Caco-2 (cell line): ENCODE measurements at regions of chr5 and their contacts with region 1.

Region 1: GRCh38 chr5:124583469-124584350 is 162.7 kb downstream of the ZNF608 start:
- DNase-seq: no peak
- H3K4me3 ChIP-seq: no peak overlapping the region
- H3K4me3 Mint-ChIP-seq: no peak overlapping the region
- H3K27ac Mint-ChIP-seq: peak overlapping the region; percentile 89
- H3K4me1 ChIP-seq: peaks cover 38% of the 10 kb centered on the region
- H3K4me1 Mint-ChIP-seq: peaks cover 30% of the 10 kb centered on the region
- H3K27me3 ChIP-seq: no peaks in the 10 kb centered on the region
- H3K27me3 Mint-ChIP-seq: no peaks in the 10 kb centered on the region
- CTCF ChIP-seq: no peak

Region 2: DNA sequence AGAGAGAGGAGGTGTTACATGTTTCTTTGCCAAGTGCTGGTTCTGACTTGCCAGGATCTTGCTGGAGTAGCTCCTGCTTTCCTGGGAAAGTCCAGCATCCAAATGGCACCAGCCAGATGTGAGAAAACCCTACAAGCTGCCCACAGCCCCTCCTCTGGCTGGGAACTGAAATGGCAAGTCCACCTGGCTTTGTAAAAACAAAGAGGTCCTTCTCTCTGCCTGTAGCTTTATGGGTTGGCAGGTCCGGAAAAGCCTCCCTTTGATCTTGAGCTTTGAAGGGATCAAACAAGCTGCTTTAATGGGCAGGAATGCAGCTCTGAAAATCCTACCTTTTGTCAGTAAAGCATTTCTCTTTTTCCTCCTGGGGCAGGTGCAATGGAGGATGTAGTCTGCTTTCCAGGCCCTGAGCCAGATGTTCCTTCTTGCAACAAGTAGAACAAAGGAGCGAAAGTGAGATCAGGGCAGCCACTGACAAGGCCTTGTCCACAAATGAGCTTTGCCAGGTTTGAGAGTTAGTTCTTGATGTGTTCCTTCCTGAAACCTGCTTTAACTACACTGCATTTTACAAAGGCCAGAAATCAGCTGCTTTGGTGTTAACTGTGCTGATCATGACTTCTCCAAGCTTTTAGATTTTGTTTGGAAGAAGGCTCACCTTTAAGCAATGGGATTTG is 293.9 kb before region 1 on chr5:
- CTCF ChIA-PET with region 1: no interaction called
- POLR2A ChIA-PET with region 1: no interaction called
- intact Hi-C with region 1: loop called (anchors 1 kb)
- DNase-seq: peak; percentile 76 to 78
- H3K4me3 ChIP-seq: no peak overlapping the region
- H3K4me3 Mint-ChIP-seq: no peak overlapping the region
- H3K27ac Mint-ChIP-seq: peak overlapping the region; percentile 13
- H3K4me1 ChIP-seq: peaks cover 21% of the 10 kb centered on the region; the same call in 1 of the 2 replicates
- H3K4me1 Mint-ChIP-seq: peaks cover 18% of the 10 kb centered on the region
- H3K27me3 ChIP-seq: no peaks in the 10 kb centered on the region
- H3K27me3 Mint-ChIP-seq: no peaks in the 10 kb centered on the region
- CTCF ChIP-seq: peak; percentile 20 to 42

Region 3: DNA sequence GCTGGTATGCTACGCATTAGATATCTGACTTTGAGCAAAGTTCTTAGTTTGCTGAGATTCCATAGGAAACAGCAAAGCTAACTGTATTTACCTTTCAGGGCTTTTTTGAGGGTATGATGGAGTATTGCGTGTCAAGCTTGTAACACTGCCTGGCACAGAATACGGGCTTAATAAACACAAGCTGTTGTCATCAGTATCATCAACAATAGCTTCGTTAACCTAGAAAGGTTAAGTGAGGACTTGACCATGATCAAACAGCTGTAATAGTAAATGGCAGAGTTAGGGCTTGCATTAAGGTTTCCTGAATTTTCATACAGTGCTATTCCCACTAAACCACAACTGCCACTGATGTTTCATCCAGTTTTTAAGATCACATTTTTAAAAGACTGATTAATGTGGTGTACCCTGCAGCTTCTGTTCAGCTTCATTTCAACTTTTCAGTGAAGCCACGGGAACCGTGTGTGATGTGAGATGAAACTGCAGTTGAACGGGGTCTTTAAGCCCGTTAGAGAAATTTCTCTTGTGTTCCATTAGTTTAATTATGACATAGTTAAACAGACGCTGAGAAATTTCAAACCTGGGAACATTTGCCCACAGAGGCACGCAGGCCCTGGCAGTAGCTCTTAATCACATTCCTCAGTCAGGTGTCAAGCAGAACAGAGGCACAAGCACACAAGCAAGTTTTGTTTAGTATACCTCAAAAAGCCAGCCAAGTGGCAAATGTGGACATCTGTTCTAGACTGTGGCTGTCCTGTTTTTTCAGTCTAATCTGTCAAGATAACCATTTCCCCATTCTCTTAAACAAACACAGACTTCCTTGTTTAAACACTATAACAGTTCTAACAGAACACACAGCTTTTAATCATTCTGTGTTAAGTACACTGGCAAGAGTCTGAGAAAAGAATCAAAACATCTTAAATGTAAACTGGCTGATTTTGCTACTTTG is 15.6 kb after region 1 on chr5:
- CTCF ChIA-PET with region 1: interaction called, 3 read pairs
- POLR2A ChIA-PET with region 1: no interaction called
- intact Hi-C with region 1: loop called (anchors 1 kb)
- DNase-seq: peak; percentile 55 to 59
- H3K4me3 ChIP-seq: no peak overlapping the region
- H3K4me3 Mint-ChIP-seq: no peak overlapping the region
- H3K27ac Mint-ChIP-seq: no peak overlapping the region
- H3K4me1 ChIP-seq: peaks cover 29% of the 10 kb centered on the region
- H3K4me1 Mint-ChIP-seq: peaks cover 13% of the 10 kb centered on the region
- H3K27me3 ChIP-seq: no peaks in the 10 kb centered on the region
- H3K27me3 Mint-ChIP-seq: no peaks in the 10 kb centered on the region
- CTCF ChIP-seq: no peak

Region 4: DNA sequence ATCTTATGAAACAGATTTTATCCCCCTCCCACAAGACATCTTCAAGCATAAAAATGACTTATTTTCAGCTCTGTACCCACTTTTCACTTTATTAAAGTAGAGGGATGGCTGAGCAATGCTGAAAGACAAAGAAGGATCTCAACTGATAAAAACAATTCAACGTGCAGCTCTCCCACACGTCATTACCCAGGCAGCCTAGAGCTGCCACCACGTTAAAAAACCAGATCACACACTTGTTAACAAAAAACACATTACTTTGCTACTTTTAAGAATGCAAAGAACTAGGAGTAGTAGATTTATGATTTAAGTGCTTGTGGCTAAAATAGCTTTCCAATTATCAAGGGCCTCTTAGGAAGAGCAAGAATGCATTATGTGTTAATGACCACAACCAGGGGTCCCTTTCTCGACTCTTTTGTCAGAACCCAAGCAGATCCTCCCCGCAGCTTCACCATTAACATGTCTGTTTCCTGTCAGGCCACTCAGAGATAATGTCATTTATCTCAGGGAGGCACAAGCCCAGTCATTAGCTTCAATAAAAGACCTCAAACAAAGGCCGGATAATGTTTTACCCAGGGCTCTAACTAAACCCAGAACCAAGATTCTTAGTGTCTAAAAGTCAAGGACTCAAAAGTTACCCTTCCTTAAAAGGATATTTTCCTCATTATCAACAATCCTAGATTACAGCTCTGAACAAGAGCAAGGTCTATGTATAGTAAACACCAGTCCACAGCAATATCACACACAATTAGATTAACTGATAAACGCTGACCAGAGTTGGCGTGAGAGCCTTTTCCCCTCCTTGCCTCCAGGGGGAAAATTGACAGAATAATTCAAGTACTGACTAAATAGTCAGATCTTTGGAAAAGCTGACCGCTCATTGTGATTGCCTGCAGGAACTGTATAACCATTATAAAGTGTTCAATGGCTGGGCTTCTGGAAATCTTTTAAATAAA is 155.2 kb after region 1 on chr5:
- CTCF ChIA-PET with region 1: no interaction called
- POLR2A ChIA-PET with region 1: no interaction called
- intact Hi-C with region 1: loop called (anchors 2 kb)
- DNase-seq: peak; percentile 37 to 69
- H3K4me3 ChIP-seq: no peak overlapping the region
- H3K4me3 Mint-ChIP-seq: peak overlapping the region; percentile 51
- H3K27ac Mint-ChIP-seq: peak overlapping the region; percentile 67
- H3K4me1 ChIP-seq: peaks cover 92% of the 10 kb centered on the region
- H3K4me1 Mint-ChIP-seq: peaks cover 47% of the 10 kb centered on the region
- H3K27me3 ChIP-seq: no peaks in the 10 kb centered on the region
- H3K27me3 Mint-ChIP-seq: no peaks in the 10 kb centered on the region
- CTCF ChIP-seq: peak in 1 of 2 experiments; percentile 23

Region 5: GRCh38 chr5:124773315-124774311 is 189.9 kb after region 1 on chr5:
- CTCF ChIA-PET with region 1: no interaction called
- POLR2A ChIA-PET with region 1: no interaction called
- intact Hi-C with region 1: no loop called
- DNase-seq: no peak
- H3K4me3 ChIP-seq: no peak overlapping the region
- H3K4me3 Mint-ChIP-seq: no peak overlapping the region
- H3K27ac Mint-ChIP-seq: no peak overlapping the region
- H3K4me1 ChIP-seq: no peaks in the 10 kb centered on the region
- H3K4me1 Mint-ChIP-seq: no peaks in the 10 kb centered on the region
- H3K27me3 ChIP-seq: no peaks in the 10 kb centered on the region
- H3K27me3 Mint-ChIP-seq: no peaks in the 10 kb centered on the region
- CTCF ChIP-seq: no peak